ENCODE measurements at regions of chr4 and their contacts with region 1.

Region 1: GRCh38 chr4:2186133-2186864 is 55.6 kb downstream of the HAUS3 start:
- DNase-seq: no peak
- CTCF ChIP-seq: peak; percentile 42

Region 2: GRCh38 chr4:1726146-1726934 is 460.0 kb before region 1 on chr4:
- in situ Hi-C with region 1: loop called (anchors 25 kb)
- DNase-seq: peak; percentile 86
- CTCF ChIP-seq: peak; percentile 94

Region 3: DNA sequence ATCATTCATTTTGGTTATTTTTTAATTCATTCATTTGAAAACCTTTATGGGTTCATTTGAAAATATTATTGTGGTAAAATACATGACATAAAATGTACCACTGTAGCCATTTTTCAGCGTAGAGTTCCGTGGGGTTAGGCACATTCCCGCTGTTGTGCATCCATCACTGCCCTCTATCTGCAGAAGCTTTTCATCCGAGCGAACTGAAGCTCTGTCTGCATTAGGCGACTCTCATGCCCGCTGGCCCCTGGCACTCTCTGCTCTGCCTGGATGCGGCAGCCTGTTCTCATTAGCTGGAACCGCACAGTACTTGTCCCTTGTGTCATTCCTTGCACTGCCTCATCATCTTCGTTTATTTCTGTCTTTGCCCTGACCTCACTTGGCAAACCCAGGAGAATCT is 250.0 kb after region 1 on chr4:
- in situ Hi-C with region 1: no loop called
- DNase-seq: no peak
- CTCF ChIP-seq: no peak

Measured in GM13977 (cell line).